ENCODE measurements at regions of chr17 and their contacts with region 1.

Region 1: GRCh38 chr17:12089809-12090384 is 69.2 kb downstream of the MAP2K4 start:
- DNase-seq: no peak
- H3K4me3 ChIP-seq: no peak overlapping the region
- H3K27ac ChIP-seq: no peak overlapping the region
- H3K4me1 ChIP-seq: no peaks in the 10 kb centered on the region
- H3K27me3 ChIP-seq: no peaks in the 10 kb centered on the region
- CTCF ChIP-seq: no peak
- EP300 ChIP-seq: no peak
- POLR2A ChIP-seq: no peak

Region 2: DNA sequence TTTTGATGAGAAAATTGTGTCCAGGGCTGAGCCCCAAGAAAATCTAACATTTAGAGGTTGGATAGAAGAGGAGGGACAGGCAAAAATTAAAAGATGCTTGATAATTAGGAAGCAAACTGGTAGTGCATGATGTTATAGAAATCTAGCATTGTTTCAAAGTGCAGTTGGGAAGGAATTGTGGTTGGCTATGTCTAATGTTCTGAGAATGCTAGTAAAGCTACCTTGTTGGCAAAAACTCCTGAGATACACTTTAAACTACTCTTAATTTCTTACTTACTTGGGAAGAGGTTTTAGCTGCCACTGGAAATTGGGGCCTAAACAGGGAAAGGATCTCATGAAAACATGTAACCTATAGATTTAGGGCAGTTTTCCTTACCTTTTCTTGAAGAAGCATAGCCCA is 21.0 kb before region 1 on chr17:
- in situ Hi-C with region 1: no loop called
- intact Hi-C with region 1: loop called (anchors 1 kb)
- DNase-seq: no peak
- H3K4me3 ChIP-seq: no peak overlapping the region
- H3K27ac ChIP-seq: no peak overlapping the region
- H3K4me1 ChIP-seq: peaks cover 0 to 7% (median 0%) of the 10 kb centered on the region in 4 donors
- H3K27me3 ChIP-seq: no peaks in the 10 kb centered on the region
- CTCF ChIP-seq: no peak
- EP300 ChIP-seq: no peak
- POLR2A ChIP-seq: no peak

Region 3: GRCh38 chr17:12140685-12141084 is 50.8 kb after region 1 on chr17:
- in situ Hi-C with region 1: loop called in 1 of 4 experiments (anchors 10 kb)
- intact Hi-C with region 1: no loop called
- DNase-seq: no peak
- H3K4me3 ChIP-seq: no peak overlapping the region
- H3K27ac ChIP-seq: no peak overlapping the region
- H3K4me1 ChIP-seq: no peaks in the 10 kb centered on the region
- H3K27me3 ChIP-seq: no peaks in the 10 kb centered on the region
- CTCF ChIP-seq: no peak
- EP300 ChIP-seq: no peak
- POLR2A ChIP-seq: no peak